ENCODE measurements at regions of chr12 and their contacts with region 1.

Region 1: DNA sequence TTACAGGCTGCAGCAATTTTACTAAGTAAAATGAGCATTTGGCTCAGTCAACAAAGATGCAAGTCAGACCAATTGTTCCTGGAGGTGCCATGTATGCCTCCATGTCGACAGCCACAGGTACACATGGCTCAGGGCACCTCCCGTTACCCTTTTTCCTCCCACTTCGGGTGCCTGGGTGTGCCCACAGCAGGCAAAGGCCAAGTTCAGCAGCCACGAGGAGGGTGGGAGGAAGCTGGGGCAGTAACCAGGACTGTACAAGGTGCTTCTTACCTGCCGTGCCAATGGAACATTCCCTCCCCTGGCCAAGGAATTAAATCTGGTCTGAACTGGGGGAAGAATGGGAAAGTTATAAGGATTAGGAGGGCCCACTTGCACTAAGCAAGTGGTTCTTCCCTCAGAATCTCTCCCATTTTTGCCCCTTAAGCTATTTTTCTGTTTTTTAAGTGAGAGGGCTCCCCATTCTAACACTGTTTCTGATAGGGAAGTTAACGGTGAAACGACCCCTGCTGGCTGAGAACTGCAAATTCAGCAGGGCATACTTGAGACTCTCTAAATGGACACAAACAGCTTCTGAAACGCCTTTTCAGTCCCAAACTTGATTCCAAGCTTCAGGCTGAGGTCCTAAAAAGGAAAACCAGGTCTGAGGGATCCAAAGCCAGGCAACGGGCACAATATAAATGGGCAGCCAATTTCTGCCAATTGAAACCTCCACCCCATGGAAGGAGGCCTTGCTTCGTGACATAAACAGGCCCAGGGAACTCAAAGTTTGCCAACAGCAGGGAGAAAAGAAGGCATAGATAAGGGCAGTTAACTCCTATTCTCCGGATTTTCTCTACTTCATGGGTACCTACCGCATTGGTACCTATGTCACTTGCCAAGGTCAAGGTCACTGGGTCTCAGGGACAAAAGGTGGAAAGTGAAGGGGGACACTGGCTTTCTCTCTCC is 24.8 kb downstream of the CLECL1 start:
- DNase-seq: peak; percentile 30
- H3K4me3 ChIP-seq: no peak overlapping the region
- H3K27ac ChIP-seq: peak overlapping the region; percentile 3
- H3K27me3 ChIP-seq: peaks cover 2% of the 10 kb centered on the region
- CTCF ChIP-seq: peak; percentile 89

Region 2: GRCh38 chr12:9331218-9331626 is 376.9 kb before region 1 on chr12:
- CTCF ChIA-PET with region 1: interaction called, 21 read pairs
- POLR2A ChIA-PET with region 1: no interaction called
- DNase-seq: no peak
- H3K4me3 ChIP-seq: no peak overlapping the region
- H3K27ac ChIP-seq: no peak overlapping the region
- H3K27me3 ChIP-seq: no peaks in the 10 kb centered on the region
- CTCF ChIP-seq: peak; percentile 99

Region 3: DNA sequence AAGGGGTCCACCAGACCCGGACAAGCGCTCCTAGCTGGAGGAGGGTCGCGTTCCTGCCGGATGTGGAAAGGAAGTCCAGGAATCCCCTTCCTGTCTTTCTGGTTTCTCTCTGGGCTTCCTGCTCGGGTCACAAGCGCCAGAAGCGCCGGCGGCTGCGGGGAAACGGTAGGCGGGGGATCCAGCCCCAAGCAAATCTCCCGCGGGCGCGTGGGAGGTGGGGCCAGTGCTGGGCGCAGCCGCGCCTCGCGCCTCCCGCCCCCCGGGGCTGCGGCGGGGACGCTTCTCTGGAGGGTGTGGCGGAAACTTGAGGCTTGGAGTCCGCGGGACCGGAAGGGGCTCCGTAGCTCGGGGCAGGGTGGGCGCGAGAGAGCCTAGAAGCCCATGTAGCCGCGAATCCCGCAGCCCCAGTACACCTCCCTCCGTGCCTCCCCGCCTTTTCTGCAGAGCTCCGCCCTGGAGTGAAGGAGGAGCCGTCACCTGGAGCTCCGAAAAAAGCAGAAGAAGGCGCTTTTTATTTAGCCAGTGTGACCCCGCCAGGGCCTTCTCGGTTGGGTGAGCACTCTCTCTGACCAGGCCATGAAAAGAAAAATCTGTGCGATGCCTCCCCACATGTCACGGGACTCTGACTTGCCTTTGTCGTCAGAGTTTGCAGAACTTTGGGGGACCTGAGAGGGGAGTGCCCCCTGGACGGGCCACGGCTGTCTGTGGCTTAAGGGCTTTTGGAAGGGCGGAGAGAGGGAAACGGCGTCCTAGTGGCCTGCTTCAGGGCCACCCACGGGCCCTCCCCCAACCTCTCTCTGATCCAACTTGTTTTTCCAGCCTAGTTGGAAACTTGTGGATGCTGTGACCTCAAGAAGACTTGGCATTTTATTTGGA is 60.1 kb before region 1 on chr12:
- CTCF ChIA-PET with region 1: interaction called, 11 read pairs
- POLR2A ChIA-PET with region 1: no interaction called
- DNase-seq: no peak
- H3K4me3 ChIP-seq: peak overlapping the region; percentile 79
- H3K27ac ChIP-seq: peak overlapping the region; percentile 85
- H3K27me3 ChIP-seq: no peaks in the 10 kb centered on the region
- CTCF ChIP-seq: no peak

Region 4: DNA sequence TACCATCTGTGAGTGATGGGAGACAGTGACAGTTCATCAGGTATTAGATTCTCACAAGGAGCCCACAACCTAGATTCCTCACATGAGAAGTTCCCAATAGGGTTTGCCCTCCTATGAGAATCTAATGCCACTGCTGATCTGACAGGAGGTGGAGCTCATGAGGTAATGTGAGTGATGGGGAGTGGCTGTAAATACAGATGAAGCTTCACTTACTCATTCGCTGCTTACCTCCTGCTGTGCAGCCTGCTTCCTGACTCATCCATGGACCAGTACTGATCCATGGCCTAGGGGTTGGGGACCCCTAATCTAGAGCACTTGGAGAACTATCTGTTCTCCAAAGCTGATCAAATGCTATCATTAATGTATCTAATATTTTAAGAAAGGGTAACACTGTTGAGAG is 20.9 kb before region 1 on chr12:
- CTCF ChIA-PET with region 1: interaction called, 10 read pairs
- POLR2A ChIA-PET with region 1: no interaction called
- DNase-seq: no peak
- H3K4me3 ChIP-seq: no peak overlapping the region
- H3K27ac ChIP-seq: no peak overlapping the region
- H3K27me3 ChIP-seq: no peaks in the 10 kb centered on the region
- CTCF ChIP-seq: no peak

Region 5: GRCh38 chr12:9721394-9722092 is 13.4 kb after region 1 on chr12:
- CTCF ChIA-PET with region 1: interaction called, 16 read pairs
- POLR2A ChIA-PET with region 1: no interaction called
- DNase-seq: no peak
- H3K4me3 ChIP-seq: no peak overlapping the region
- H3K27ac ChIP-seq: no peak overlapping the region
- H3K27me3 ChIP-seq: peaks cover 3% of the 10 kb centered on the region
- CTCF ChIP-seq: no peak

Region 6: DNA sequence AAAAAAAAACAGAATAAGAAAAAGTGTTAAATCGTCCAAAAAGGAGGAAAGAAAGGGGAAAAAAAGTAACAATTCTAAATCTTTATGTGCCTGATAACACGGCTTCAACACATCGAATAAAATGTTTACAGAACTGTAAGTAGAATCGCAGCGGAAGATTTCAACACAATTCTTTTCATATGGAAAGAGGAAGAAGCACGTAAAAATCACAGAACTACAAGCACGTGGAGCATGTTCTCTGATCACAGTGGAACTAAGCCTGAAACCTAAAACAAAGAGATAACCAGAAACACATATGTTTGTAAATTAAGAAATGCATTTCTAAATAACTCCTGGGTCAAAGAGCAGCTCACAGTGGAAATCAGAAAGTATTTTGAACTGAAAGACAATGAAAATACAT is 413.1 kb after region 1 on chr12:
- CTCF ChIA-PET with region 1: no interaction called
- POLR2A ChIA-PET with region 1: no interaction called
- DNase-seq: no peak
- H3K4me3 ChIP-seq: no peak overlapping the region
- H3K27ac ChIP-seq: no peak overlapping the region
- H3K27me3 ChIP-seq: no peaks in the 10 kb centered on the region
- CTCF ChIP-seq: no peak